CD8-positive, alpha-beta T cell (primary cell): ENCODE measurements at regions of chr11 and their contacts with region 1.

Region 1: GRCh38 chr11:72141066-72141465 is 5.5 kb downstream of the FOLR3 start:
- DNase-seq: no peak
- ATAC-seq: no peak
- H3K4me3 ChIP-seq: no peak overlapping the region
- H3K4me3 Mint-ChIP-seq: no peak overlapping the region
- H3K27ac ChIP-seq: no peak overlapping the region
- H3K27ac Mint-ChIP-seq: no peak overlapping the region
- H3K4me1 ChIP-seq: no peaks in the 10 kb centered on the region
- H3K4me1 Mint-ChIP-seq: peaks cover 3% of the 10 kb centered on the region
- H3K27me3 ChIP-seq: no peaks in the 10 kb centered on the region
- H3K27me3 Mint-ChIP-seq: peaks cover 3% of the 10 kb centered on the region
- CTCF ChIP-seq: no peak

Region 2: GRCh38 chr11:72015511-72016171 is 125.4 kb before region 1 on chr11:
- CTCF ChIA-PET with region 1: interaction called, 112 read pairs
- POLR2A ChIA-PET with region 1: no interaction called
- intact Hi-C with region 1: no loop called
- DNase-seq: peak in 1 of 9 experiments; percentile 26
- ATAC-seq: no peak
- H3K4me3 ChIP-seq: no peak overlapping the region
- H3K4me3 Mint-ChIP-seq: no peak overlapping the region
- H3K27ac ChIP-seq: no peak overlapping the region
- H3K27ac Mint-ChIP-seq: no peak overlapping the region
- H3K4me1 ChIP-seq: no peaks in the 10 kb centered on the region
- H3K4me1 Mint-ChIP-seq: peaks cover 1% of the 10 kb centered on the region
- H3K27me3 ChIP-seq: no peaks in the 10 kb centered on the region
- H3K27me3 Mint-ChIP-seq: no peaks in the 10 kb centered on the region
- CTCF ChIP-seq: no peak

Region 3: GRCh38 chr11:72040726-72041441 is 100.2 kb before region 1 on chr11:
- CTCF ChIA-PET with region 1: interaction called, 20 read pairs
- POLR2A ChIA-PET with region 1: interaction called, 3 read pairs
- intact Hi-C with region 1: no loop called
- DNase-seq: peak; percentile 52 to 92 (median 85)
- ATAC-seq: peak; percentile 77
- H3K4me3 ChIP-seq: peak overlapping the region; percentile 80 to 82
- H3K4me3 Mint-ChIP-seq: no peak overlapping the region
- H3K27ac ChIP-seq: peak overlapping the region; percentile 93 to 96
- H3K27ac Mint-ChIP-seq: no peak overlapping the region
- H3K4me1 ChIP-seq: peaks cover 72% of the 10 kb centered on the region
- H3K4me1 Mint-ChIP-seq: peaks cover 40% of the 10 kb centered on the region
- H3K27me3 ChIP-seq: no peaks in the 10 kb centered on the region
- H3K27me3 Mint-ChIP-seq: no peaks in the 10 kb centered on the region
- CTCF ChIP-seq: no peak

Region 4: DNA sequence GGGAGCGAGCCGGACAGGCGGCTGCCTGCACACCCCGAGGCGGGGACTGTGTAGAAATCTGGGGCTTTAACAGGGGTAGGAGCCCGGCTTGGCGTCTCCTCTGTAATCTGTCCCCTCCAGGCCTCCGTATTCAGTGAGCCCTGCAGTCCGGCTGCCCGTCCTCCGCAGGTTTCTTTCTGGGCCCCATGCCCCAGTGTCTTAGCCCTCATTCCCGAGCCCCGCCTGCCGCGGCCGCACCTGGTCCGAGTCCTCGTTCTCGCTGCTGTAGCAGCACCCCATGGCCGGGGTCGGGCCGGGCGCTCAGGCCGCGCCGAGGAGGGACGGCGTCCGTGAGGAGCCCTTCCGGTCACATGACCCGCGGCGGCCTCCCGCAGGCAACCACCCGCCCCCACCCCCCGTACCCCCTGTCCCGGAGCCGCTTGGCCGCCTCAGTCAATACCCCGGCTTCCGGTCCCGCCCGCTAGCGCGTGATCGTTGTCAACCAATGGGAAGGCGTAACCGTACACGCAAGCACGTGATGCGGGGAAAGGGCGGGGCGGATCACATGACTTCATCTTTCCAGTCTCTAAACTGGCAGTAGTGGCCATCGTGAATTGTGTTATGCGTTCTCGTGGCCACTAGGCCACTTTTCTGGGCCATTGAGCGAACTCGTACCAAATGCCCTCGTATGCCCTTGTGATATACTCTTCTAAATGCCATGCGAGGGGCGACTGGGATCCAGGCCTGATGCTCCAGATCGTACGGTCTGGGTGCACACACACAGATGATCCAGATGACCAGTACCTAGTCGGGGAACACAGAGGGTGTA is 37.9 kb before region 1 on chr11 and contains the start of gene LAMTOR1:
- CTCF ChIA-PET with region 1: interaction called, 6 read pairs
- POLR2A ChIA-PET with region 1: no interaction called
- intact Hi-C with region 1: loop called (anchors 1 to 5 kb)
- DNase-seq: peak; percentile 93 to 99 (median 98)
- ATAC-seq: peak; percentile 96
- H3K4me3 ChIP-seq: peak within 1 kb of the TSS; percentile 67 to 93
- H3K4me3 Mint-ChIP-seq: peak within 1 kb of the TSS; percentile 74
- H3K27ac ChIP-seq: peak within 1 kb of the TSS; percentile 90 to 97
- H3K27ac Mint-ChIP-seq: peak within 1 kb of the TSS; percentile 88
- H3K4me1 ChIP-seq: peaks cover 22% of the 10 kb centered on the region
- H3K4me1 Mint-ChIP-seq: peaks cover 45% of the 10 kb centered on the region
- H3K27me3 ChIP-seq: no peaks in the 10 kb centered on the region
- H3K27me3 Mint-ChIP-seq: no peaks in the 10 kb centered on the region
- CTCF ChIP-seq: no peak
- total RNA-seq, gene LAMTOR1: 27.1 to 30.4 TPM

Region 5: GRCh38 chr11:72129381-72129780 is 11.7 kb before region 1 on chr11:
- CTCF ChIA-PET with region 1: interaction called, 13 read pairs
- POLR2A ChIA-PET with region 1: no interaction called
- intact Hi-C with region 1: no loop called
- DNase-seq: no peak
- ATAC-seq: no peak
- H3K4me3 ChIP-seq: no peak overlapping the region
- H3K4me3 Mint-ChIP-seq: no peak overlapping the region
- H3K27ac ChIP-seq: no peak overlapping the region
- H3K27ac Mint-ChIP-seq: no peak overlapping the region
- H3K4me1 ChIP-seq: no peaks in the 10 kb centered on the region
- H3K4me1 Mint-ChIP-seq: no peaks in the 10 kb centered on the region
- H3K27me3 ChIP-seq: no peaks in the 10 kb centered on the region
- H3K27me3 Mint-ChIP-seq: peaks cover 16% of the 10 kb centered on the region
- CTCF ChIP-seq: no peak

Region 6: GRCh38 chr11:72179804-72180396 is 38.8 kb after region 1 on chr11:
- CTCF ChIA-PET with region 1: interaction called, 4 read pairs
- POLR2A ChIA-PET with region 1: no interaction called
- intact Hi-C with region 1: loop called (anchors 1 to 2 kb)
- DNase-seq: no peak
- ATAC-seq: no peak
- H3K4me3 ChIP-seq: no peak overlapping the region
- H3K4me3 Mint-ChIP-seq: no peak overlapping the region
- H3K27ac ChIP-seq: no peak overlapping the region
- H3K27ac Mint-ChIP-seq: no peak overlapping the region
- H3K4me1 ChIP-seq: no peaks in the 10 kb centered on the region
- H3K4me1 Mint-ChIP-seq: peaks cover 2% of the 10 kb centered on the region
- H3K27me3 ChIP-seq: no peaks in the 10 kb centered on the region
- H3K27me3 Mint-ChIP-seq: peaks cover 8% of the 10 kb centered on the region
- CTCF ChIP-seq: no peak

Region 7: DNA sequence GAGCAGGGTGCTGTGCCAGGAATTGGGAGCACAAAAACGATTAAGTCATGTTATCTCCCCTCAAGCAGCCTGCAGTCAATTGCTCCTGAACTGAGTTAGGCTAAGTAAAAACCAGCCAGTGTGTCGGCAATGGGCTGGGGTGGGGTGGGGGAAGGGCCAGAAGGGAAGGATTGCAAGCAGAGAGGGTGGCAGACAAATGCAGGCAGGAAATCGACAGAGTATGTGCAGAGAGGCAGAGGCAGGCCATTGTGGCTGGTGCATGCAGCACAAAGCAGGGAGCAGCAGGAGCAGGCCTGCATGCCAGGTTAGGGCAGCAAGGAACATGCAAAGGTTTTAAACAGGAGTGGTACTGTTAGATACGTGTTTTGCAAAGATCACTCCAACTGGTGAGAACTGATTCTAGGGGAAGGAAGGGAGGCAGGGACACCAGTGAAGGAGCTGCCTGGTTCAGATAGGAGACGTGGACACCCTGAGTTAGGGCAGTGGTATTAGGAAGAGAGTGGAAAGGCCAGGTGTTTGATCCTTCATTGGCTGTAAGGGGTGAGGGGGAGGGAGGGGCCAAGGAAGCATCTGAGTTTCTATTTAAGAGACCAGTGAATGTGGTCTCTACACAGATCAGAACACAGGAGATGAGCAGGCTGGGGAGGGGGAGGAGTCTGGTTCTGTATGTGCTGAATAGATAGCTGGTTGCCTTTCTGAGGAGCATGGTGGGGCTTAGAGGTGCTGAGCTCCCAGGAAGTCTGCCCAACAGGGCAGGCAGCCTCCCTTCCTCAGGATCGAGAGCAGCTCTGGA is 173.7 kb after region 1 on chr11:
- CTCF ChIA-PET with region 1: no interaction called
- POLR2A ChIA-PET with region 1: no interaction called
- intact Hi-C with region 1: no loop called
- DNase-seq: no peak
- ATAC-seq: no peak
- H3K4me3 ChIP-seq: no peak overlapping the region
- H3K4me3 Mint-ChIP-seq: no peak overlapping the region
- H3K27ac ChIP-seq: no peak overlapping the region
- H3K27ac Mint-ChIP-seq: no peak overlapping the region
- H3K4me1 ChIP-seq: no peaks in the 10 kb centered on the region
- H3K4me1 Mint-ChIP-seq: no peaks in the 10 kb centered on the region
- H3K27me3 ChIP-seq: no peaks in the 10 kb centered on the region
- H3K27me3 Mint-ChIP-seq: no peaks in the 10 kb centered on the region
- CTCF ChIP-seq: no peak

Region 8: GRCh38 chr11:72703267-72704008 is 562.4 kb after region 1 on chr11:
- CTCF ChIA-PET with region 1: no interaction called
- POLR2A ChIA-PET with region 1: no interaction called
- intact Hi-C with region 1: no loop called
- DNase-seq: no peak
- ATAC-seq: no peak
- H3K4me3 ChIP-seq: no peak overlapping the region
- H3K4me3 Mint-ChIP-seq: no peak overlapping the region
- H3K27ac ChIP-seq: no peak overlapping the region
- H3K27ac Mint-ChIP-seq: no peak overlapping the region
- H3K4me1 ChIP-seq: no peaks in the 10 kb centered on the region
- H3K4me1 Mint-ChIP-seq: peaks cover 2% of the 10 kb centered on the region
- H3K27me3 ChIP-seq: no peaks in the 10 kb centered on the region
- H3K27me3 Mint-ChIP-seq: no peaks in the 10 kb centered on the region
- CTCF ChIP-seq: no peak